ENCODE measurements at regions of chr2 and their contacts with region 1.

Region 1: GRCh38 chr2:112850588-112850987 is 14.0 kb upstream of the IL1B start:
- DNase-seq: no peak
- ATAC-seq: no peak
- H3K4me3 ChIP-seq: no peak overlapping the region
- H3K4me3 Mint-ChIP-seq: no peak overlapping the region
- H3K27ac ChIP-seq: no peak overlapping the region
- H3K27ac Mint-ChIP-seq: no peak overlapping the region
- H3K4me1 ChIP-seq: no peaks in the 10 kb centered on the region
- H3K4me1 Mint-ChIP-seq: no peaks in the 10 kb centered on the region
- H3K27me3 ChIP-seq: no peaks in the 10 kb centered on the region
- H3K27me3 Mint-ChIP-seq: peaks cover 9% of the 10 kb centered on the region
- CTCF ChIP-seq: no peak

Region 2: GRCh38 chr2:112740527-112740926 is 110.1 kb before region 1 on chr2:
- CTCF ChIA-PET with region 1: no interaction called
- POLR2A ChIA-PET with region 1: no interaction called
- intact Hi-C with region 1: no loop called
- DNase-seq: no peak
- ATAC-seq: no peak
- H3K4me3 ChIP-seq: no peak overlapping the region
- H3K4me3 Mint-ChIP-seq: no peak overlapping the region
- H3K27ac ChIP-seq: no peak overlapping the region
- H3K27ac Mint-ChIP-seq: no peak overlapping the region
- H3K4me1 ChIP-seq: no peaks in the 10 kb centered on the region
- H3K4me1 Mint-ChIP-seq: no peaks in the 10 kb centered on the region
- H3K27me3 ChIP-seq: no peaks in the 10 kb centered on the region
- H3K27me3 Mint-ChIP-seq: no peaks in the 10 kb centered on the region
- CTCF ChIP-seq: no peak

Region 3: DNA sequence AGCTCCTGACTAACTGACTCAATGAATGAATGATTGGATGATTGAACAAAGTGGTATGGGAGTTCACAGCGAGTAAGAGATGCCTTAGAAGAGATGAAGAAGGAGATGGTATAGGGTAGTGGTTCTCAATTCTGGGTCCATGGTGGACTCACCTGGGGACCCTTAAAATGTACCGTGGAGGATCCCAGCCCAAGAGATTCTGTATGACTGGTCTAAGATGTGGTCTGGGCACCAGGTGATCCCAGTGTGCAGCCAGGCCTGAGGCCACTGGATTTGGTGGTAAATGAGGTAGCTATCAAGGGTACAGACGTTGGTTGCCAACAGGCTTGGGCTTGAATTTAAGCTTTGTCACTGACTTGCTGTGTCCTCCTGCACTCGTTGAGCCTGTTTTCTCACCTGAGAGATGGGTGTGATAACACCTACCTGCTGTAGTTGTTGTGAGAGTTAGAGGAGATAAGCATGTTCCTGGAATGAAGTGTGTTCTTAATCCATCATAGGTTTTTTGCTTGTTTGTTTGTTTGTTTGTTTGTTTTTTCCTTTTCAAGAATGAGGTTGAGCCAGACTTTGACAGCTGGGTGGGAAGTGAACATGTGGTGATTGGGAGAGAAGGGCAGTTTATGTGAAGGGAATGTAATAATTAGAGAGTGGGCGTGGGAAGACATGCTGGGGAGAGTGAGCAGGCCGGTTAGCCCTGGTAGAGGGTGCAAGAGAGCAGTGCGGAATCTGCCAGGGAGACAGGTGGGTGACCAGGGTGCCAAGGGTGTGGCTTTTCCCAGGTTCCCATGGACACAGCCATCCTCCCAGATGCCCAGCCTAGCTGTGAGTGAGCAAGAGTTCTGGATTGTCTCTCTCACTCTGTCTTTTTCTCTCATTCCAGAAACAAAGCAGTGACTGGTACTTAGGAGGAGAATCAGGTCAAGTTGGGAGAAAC is 17.4 kb after region 1 on chr2:
- CTCF ChIA-PET with region 1: no interaction called
- POLR2A ChIA-PET with region 1: no interaction called
- intact Hi-C with region 1: no loop called
- DNase-seq: no peak
- ATAC-seq: no peak
- H3K4me3 ChIP-seq: no peak overlapping the region
- H3K4me3 Mint-ChIP-seq: no peak overlapping the region
- H3K27ac ChIP-seq: no peak overlapping the region
- H3K27ac Mint-ChIP-seq: no peak overlapping the region
- H3K4me1 ChIP-seq: no peaks in the 10 kb centered on the region
- H3K4me1 Mint-ChIP-seq: no peaks in the 10 kb centered on the region
- H3K27me3 ChIP-seq: no peaks in the 10 kb centered on the region
- H3K27me3 Mint-ChIP-seq: peaks cover 23% of the 10 kb centered on the region
- CTCF ChIP-seq: no peak

Region 4: GRCh38 chr2:112884869-112885505 is 34.4 kb after region 1 on chr2:
- CTCF ChIA-PET with region 1: interaction called, 12 read pairs
- POLR2A ChIA-PET with region 1: no interaction called
- intact Hi-C with region 1: no loop called
- DNase-seq: peak; percentile 40 to 73 (median 65)
- ATAC-seq: peak; percentile 78
- H3K4me3 ChIP-seq: no peak overlapping the region
- H3K4me3 Mint-ChIP-seq: no peak overlapping the region
- H3K27ac ChIP-seq: no peak overlapping the region
- H3K27ac Mint-ChIP-seq: no peak overlapping the region
- H3K4me1 ChIP-seq: peaks cover 5% of the 10 kb centered on the region
- H3K4me1 Mint-ChIP-seq: peaks cover 12% of the 10 kb centered on the region
- H3K27me3 ChIP-seq: no peaks in the 10 kb centered on the region
- H3K27me3 Mint-ChIP-seq: no peaks in the 10 kb centered on the region
- CTCF ChIP-seq: peak; percentile 83

Region 5: DNA sequence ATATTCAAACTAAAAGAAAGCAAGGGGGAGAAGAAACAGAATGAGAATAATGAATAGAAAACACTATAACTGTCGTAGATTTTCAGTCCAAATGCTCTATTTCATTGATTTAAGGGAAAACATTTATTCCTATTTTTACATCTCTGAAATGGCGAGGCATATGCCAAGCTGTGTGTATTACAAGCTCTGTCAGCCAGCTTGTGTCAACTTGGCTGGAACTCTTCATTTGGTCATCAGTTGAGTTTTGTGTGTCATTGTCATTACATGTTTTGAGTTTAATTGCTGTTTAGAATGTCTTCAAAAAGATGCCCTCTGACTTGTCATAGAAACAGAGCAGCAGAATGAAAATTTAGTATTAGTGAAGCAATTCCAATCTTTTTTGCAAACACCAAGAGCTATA is 52.2 kb after region 1 on chr2:
- CTCF ChIA-PET with region 1: no interaction called
- POLR2A ChIA-PET with region 1: no interaction called
- intact Hi-C with region 1: loop called in 1 of 2 experiments (anchors 2 kb)
- DNase-seq: no peak
- ATAC-seq: no peak
- H3K4me3 ChIP-seq: no peak overlapping the region
- H3K4me3 Mint-ChIP-seq: no peak overlapping the region
- H3K27ac ChIP-seq: no peak overlapping the region
- H3K27ac Mint-ChIP-seq: no peak overlapping the region
- H3K4me1 ChIP-seq: no peaks in the 10 kb centered on the region
- H3K4me1 Mint-ChIP-seq: no peaks in the 10 kb centered on the region
- H3K27me3 ChIP-seq: no peaks in the 10 kb centered on the region
- H3K27me3 Mint-ChIP-seq: peaks cover 7% of the 10 kb centered on the region
- CTCF ChIP-seq: no peak